Caco-2 (cell line): ENCODE measurements at regions of chrX and their contacts with region 1.

Region 1: GRCh38 chrX:112211459-112211858 is 128.9 kb upstream of the TRPC5 start:
- DNase-seq: no peak
- H3K4me3 ChIP-seq: no peak overlapping the region
- H3K4me3 Mint-ChIP-seq: no peak overlapping the region
- H3K27ac Mint-ChIP-seq: no peak overlapping the region
- H3K4me1 ChIP-seq: no peaks in the 10 kb centered on the region
- H3K4me1 Mint-ChIP-seq: no peaks in the 10 kb centered on the region
- H3K27me3 ChIP-seq: no peaks in the 10 kb centered on the region
- H3K27me3 Mint-ChIP-seq: no peaks in the 10 kb centered on the region
- CTCF ChIP-seq: no peak

Region 2: DNA sequence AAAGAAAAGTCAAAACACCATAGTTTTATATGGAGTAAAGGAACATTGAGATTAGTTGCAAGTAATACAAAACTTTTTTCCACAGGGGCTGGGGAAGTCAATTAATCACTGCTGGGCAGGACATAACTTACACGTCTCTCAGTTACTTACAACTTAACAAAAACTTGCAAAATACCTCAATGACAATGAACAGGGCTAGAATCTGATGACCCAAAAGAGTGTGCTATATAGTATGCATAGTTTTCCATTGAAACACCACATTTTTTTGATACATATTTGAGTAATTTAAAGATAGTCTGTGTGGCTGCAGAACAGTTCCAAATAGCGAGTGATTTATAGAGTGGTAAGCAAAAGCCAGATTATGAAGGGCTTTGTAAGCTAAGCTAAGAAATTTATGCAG is 43.4 kb after region 1 on chrX:
- CTCF ChIA-PET with region 1: no interaction called
- POLR2A ChIA-PET with region 1: no interaction called
- intact Hi-C with region 1: no loop called
- DNase-seq: no peak
- H3K4me3 ChIP-seq: no peak overlapping the region
- H3K4me3 Mint-ChIP-seq: no peak overlapping the region
- H3K27ac Mint-ChIP-seq: no peak overlapping the region
- H3K4me1 ChIP-seq: no peaks in the 10 kb centered on the region
- H3K4me1 Mint-ChIP-seq: no peaks in the 10 kb centered on the region
- H3K27me3 ChIP-seq: no peaks in the 10 kb centered on the region
- H3K27me3 Mint-ChIP-seq: no peaks in the 10 kb centered on the region
- CTCF ChIP-seq: no peak

Region 3: GRCh38 chrX:112270991-112271390 is 59.5 kb after region 1 on chrX:
- CTCF ChIA-PET with region 1: no interaction called
- POLR2A ChIA-PET with region 1: no interaction called
- intact Hi-C with region 1: loop called (anchors 10 kb)
- DNase-seq: no peak
- H3K4me3 ChIP-seq: no peak overlapping the region
- H3K4me3 Mint-ChIP-seq: no peak overlapping the region
- H3K27ac Mint-ChIP-seq: no peak overlapping the region
- H3K4me1 ChIP-seq: no peaks in the 10 kb centered on the region
- H3K4me1 Mint-ChIP-seq: no peaks in the 10 kb centered on the region
- H3K27me3 ChIP-seq: no peaks in the 10 kb centered on the region
- H3K27me3 Mint-ChIP-seq: no peaks in the 10 kb centered on the region
- CTCF ChIP-seq: no peak